ENCODE measurements at regions of chr10 and their contacts with region 1.

Region 1: GRCh38 chr10:101214446-101215396 is 14.5 kb downstream of the LBX1 start:
- DNase-seq: peak; percentile 84
- ATAC-seq: peak; percentile 79
- H3K4me3 Mint-ChIP-seq: peak overlapping the region; percentile 42
- H3K27ac Mint-ChIP-seq: no peak overlapping the region
- H3K4me1 Mint-ChIP-seq: peaks cover 27% of the 10 kb centered on the region
- H3K27me3 Mint-ChIP-seq: peaks cover 75% of the 10 kb centered on the region
- CTCF ChIP-seq: peak; percentile 95

Region 2: GRCh38 chr10:101141616-101142532 is 72.8 kb before region 1 on chr10:
- CTCF ChIA-PET with region 1: interaction called, 29 read pairs
- POLR2A ChIA-PET with region 1: no interaction called
- intact Hi-C with region 1: loop called (anchors 5 kb)
- DNase-seq: peak; percentile 89
- ATAC-seq: peak; percentile 93
- H3K4me3 Mint-ChIP-seq: no peak overlapping the region
- H3K27ac Mint-ChIP-seq: no peak overlapping the region
- H3K4me1 Mint-ChIP-seq: peaks cover 14% of the 10 kb centered on the region
- H3K27me3 Mint-ChIP-seq: peaks cover 81% of the 10 kb centered on the region
- CTCF ChIP-seq: peak; percentile 99

Region 3: DNA sequence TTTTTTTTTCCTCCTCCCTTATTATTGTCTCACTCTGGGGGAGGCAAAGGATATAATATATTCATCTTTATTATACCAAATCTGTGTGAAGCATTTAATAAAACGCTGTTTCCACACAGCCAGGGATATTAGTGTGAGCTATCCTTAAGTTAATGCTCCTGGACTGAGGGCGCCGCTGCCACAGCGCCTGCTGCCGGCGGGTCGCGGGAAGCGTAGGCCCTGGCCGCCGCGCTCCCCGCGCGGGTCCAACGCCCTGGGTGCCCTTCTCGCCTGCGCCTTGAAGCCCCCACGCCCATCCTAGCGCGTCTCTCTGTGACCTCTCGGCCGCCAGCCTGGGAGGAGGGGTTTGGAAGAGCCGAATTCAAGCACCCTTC is 24.0 kb after region 1 on chr10:
- CTCF ChIA-PET with region 1: interaction called, 105 read pairs
- POLR2A ChIA-PET with region 1: interaction called, 3 read pairs
- intact Hi-C with region 1: no loop called
- DNase-seq: no peak
- ATAC-seq: peak; percentile 80
- H3K4me3 Mint-ChIP-seq: no peak overlapping the region
- H3K27ac Mint-ChIP-seq: no peak overlapping the region
- H3K4me1 Mint-ChIP-seq: peaks cover 16% of the 10 kb centered on the region
- H3K27me3 Mint-ChIP-seq: peaks cover 72% of the 10 kb centered on the region
- CTCF ChIP-seq: peak; percentile 70

Region 4: GRCh38 chr10:101291331-101292193 is 76.8 kb after region 1 on chr10:
- CTCF ChIA-PET with region 1: interaction called, 174 read pairs
- POLR2A ChIA-PET with region 1: no interaction called
- intact Hi-C with region 1: loop called (anchors 2 kb)
- DNase-seq: peak; percentile 75
- ATAC-seq: peak; percentile 84
- H3K4me3 Mint-ChIP-seq: peak overlapping the region; percentile 70
- H3K27ac Mint-ChIP-seq: no peak overlapping the region
- H3K4me1 Mint-ChIP-seq: peaks cover 8% of the 10 kb centered on the region
- H3K27me3 Mint-ChIP-seq: peaks cover 65% of the 10 kb centered on the region
- CTCF ChIP-seq: peak; percentile 88

Region 5: GRCh38 chr10:101353692-101354327 is 139.1 kb after region 1 on chr10 and contains the start of gene BTRC:
- CTCF ChIA-PET with region 1: no interaction called
- POLR2A ChIA-PET with region 1: no interaction called
- intact Hi-C with region 1: no loop called
- DNase-seq: peak; percentile 97
- ATAC-seq: peak; percentile 98
- H3K4me3 Mint-ChIP-seq: peak within 1 kb of the TSS; percentile 87
- H3K27ac Mint-ChIP-seq: peak within 1 kb of the TSS; percentile 95
- H3K4me1 Mint-ChIP-seq: peaks cover 28% of the 10 kb centered on the region
- H3K27me3 Mint-ChIP-seq: peaks cover 14% of the 10 kb centered on the region
- CTCF ChIP-seq: no peak
- total RNA-seq, gene BTRC: 11.6 to 14.6 TPM

Region 6: DNA sequence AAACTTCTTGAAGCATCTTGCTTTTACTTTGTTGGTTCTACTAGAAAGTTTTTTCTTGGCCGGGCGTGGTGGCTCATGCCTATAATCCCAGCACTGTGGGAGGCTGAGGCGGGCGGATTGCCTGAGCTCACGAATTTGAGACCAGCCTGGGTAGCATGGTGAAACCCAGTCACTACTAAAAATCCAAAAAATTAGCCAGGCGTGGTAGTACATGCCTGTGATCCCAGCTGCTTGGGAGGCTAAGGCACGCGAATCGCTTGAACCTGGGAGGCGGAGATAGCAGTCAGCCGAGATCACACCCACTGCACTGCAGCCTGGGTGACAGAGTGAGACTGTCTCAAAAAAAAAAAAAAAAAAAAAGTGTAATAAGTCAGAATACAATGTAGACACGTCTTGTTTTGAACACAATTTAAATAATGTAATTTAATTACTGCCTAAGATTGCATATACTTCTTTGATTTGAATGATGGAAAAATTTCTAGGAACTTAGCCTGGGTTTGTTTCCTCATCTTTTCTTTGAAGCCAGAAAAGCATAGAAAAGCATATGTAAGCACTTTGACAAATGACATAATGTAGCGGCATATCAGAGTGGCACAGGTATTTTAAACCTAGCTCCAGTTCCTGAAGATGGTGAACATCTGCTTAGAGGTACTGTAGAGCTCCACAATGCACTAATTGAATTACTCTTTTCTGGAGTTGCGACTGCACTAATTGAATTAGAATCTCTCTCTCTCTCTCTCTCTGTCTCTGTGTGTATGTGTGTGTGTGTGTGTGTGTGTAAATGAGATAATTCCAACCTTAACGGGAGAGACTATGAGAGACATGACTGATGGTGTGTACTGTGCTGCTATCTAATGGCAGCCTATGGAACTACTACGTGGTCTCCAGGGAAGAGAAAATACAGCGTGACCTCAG is 227.1 kb after region 1 on chr10:
- CTCF ChIA-PET with region 1: interaction called, 74 read pairs
- POLR2A ChIA-PET with region 1: no interaction called
- intact Hi-C with region 1: no loop called
- DNase-seq: peak; percentile 41
- ATAC-seq: peak; percentile 94
- H3K4me3 Mint-ChIP-seq: no peak overlapping the region
- H3K27ac Mint-ChIP-seq: no peak overlapping the region
- H3K4me1 Mint-ChIP-seq: peaks cover 3% of the 10 kb centered on the region
- H3K27me3 Mint-ChIP-seq: no peaks in the 10 kb centered on the region
- CTCF ChIP-seq: peak; percentile 75

Region 7: GRCh38 chr10:101536800-101537199 is 322.1 kb after region 1 on chr10:
- CTCF ChIA-PET with region 1: interaction called, 16 read pairs
- POLR2A ChIA-PET with region 1: no interaction called
- intact Hi-C with region 1: no loop called
- DNase-seq: no peak
- ATAC-seq: peak; percentile 66
- H3K4me3 Mint-ChIP-seq: no peak overlapping the region
- H3K27ac Mint-ChIP-seq: no peak overlapping the region
- H3K4me1 Mint-ChIP-seq: no peaks in the 10 kb centered on the region
- H3K27me3 Mint-ChIP-seq: no peaks in the 10 kb centered on the region
- CTCF ChIP-seq: peak; percentile 58

Region 8: GRCh38 chr10:101782811-101783735 is 568.4 kb after region 1 on chr10 and contains the start of gene NPM3:
- CTCF ChIA-PET with region 1: interaction called, 11 read pairs
- POLR2A ChIA-PET with region 1: no interaction called
- intact Hi-C with region 1: no loop called
- DNase-seq: peak; percentile 96
- ATAC-seq: peak; percentile 85
- H3K4me3 Mint-ChIP-seq: peak within 1 kb of the TSS; percentile 94
- H3K27ac Mint-ChIP-seq: peak within 1 kb of the TSS; percentile 95
- H3K4me1 Mint-ChIP-seq: peaks cover 42% of the 10 kb centered on the region
- H3K27me3 Mint-ChIP-seq: peaks cover 5% of the 10 kb centered on the region
- CTCF ChIP-seq: no peak
- total RNA-seq, gene NPM3: 235 to 264 TPM